Left cardiac atrium (tissue), 4 donors: ENCODE measurements at regions of chr3 and their contacts with region 1.

Region 1: DNA sequence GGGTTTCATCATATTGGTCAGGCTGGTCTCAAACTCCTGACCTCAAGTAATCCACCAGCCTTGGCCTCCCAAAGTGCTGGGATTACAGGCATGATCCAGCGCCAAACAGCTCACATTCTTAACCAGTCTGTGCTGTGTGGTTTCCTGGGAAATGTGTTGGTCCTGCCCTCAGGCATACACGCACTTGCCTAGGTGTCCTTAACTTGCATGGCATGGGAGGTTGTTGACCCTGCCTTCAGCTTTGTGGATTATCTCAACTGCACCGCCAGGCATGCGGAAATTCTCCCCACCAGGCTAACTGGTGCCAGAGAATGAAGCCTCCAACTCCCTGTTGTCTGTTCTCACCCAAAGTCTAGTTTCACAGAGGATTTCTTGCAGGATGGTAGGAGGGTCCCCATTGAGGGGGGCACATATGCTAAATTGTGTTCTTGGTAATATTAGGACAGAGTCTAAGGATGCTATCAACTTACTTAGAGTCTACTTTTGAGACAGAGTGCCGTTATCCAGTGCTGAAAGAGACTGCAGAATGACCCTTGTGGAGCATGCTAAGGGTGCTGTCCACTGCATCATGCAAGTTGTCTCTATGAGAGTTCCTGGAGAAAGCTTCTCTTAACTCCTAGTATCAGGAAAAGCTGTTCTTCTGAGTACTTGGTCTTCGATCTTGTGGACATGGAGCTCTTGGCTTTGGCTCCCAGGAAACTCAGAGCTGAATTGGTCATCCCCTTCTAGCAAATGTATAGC is 61.6 kb upstream of the EIF1B start:
- DNase-seq: no peak
- ATAC-seq: peak; percentile 56 to 67

Region 2: GRCh38 chr3:40292637-40293349 is 44.9 kb after region 1 on chr3:
- intact Hi-C with region 1: loop called in 1 of 2 experiments (anchors 5 kb)
- DNase-seq: no peak
- ATAC-seq: peak; percentile 85 to 89